ENCODE measurements at regions of chr9 and their contacts with region 1.

Region 1: DNA sequence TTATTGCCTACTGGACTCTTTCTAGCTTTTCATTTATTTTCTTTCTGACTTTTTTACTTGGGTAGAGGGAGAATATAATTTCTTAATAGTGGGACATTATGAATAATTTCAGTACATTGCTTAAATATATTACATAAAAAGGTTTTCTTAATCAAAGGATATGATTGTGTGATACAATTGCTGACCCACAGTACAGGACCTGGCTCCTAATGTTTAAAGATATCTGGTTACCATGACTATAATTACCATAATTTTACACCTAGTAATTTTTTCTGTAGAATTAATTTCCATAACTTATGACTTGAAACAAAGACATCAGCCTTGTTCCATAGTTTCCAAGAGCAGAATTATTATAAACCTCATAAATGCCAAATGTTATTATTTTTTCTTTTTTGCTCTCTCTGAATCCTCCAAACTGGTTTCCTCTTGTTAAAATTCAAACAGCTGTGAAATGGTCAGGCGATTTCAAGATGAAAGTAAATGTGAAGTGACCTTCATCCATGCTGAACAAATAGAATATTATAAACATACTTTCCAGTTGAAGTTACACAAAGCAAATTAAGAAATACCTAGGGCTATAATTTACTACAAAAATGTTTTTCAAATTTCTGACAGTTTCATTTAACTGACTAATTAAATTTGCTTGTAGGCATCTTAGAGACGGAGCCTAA is 301.2 kb upstream of the TYRP1 start:
- H3K4me3 Mint-ChIP-seq: no peak overlapping the region
- H3K27ac Mint-ChIP-seq: no peak overlapping the region
- H3K4me1 Mint-ChIP-seq: no peaks in the 10 kb centered on the region
- H3K27me3 Mint-ChIP-seq: no peaks in the 10 kb centered on the region

Region 2: GRCh38 chr9:11833056-11833455 is 558.9 kb before region 1 on chr9:
- intact Hi-C with region 1: no loop called
- H3K4me3 Mint-ChIP-seq: no peak overlapping the region
- H3K27ac Mint-ChIP-seq: no peak overlapping the region
- H3K4me1 Mint-ChIP-seq: no peaks in the 10 kb centered on the region
- H3K27me3 Mint-ChIP-seq: no peaks in the 10 kb centered on the region

Region 3: DNA sequence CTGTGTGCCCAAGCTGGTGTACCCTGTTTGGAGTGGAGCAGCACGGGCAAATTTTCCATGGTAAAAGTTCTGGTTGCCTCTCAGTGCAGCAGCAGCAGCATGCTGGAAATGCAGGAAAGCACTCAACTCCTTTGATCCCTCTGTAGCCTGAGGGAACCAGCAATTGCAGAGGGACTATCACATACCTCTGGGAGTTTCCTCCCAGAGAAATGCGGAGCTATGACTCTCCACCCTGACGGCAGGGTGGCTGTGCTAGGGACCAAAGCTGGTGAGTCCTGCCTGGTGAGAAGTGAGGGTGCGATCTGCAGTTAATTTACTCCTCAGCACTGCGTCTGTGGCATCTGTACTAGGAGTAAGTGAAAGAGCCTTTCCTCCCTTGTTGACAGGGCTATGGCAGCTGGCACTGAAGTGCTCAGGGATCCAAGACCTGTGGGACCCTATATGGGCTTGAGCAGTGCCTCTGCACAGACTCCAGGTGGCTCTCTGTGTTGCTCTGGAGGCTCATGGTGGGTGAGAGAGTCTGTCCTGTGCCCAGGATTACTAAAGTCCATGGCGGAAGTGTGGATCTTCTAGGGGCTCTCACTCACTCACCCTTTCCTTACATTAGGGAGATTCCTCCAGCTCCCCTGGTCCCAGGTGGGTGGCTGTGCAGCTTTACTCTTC is 300.0 kb before region 1 on chr9:
- intact Hi-C with region 1: no loop called
- H3K4me3 Mint-ChIP-seq: no peak overlapping the region
- H3K27ac Mint-ChIP-seq: no peak overlapping the region
- H3K4me1 Mint-ChIP-seq: no peaks in the 10 kb centered on the region
- H3K27me3 Mint-ChIP-seq: no peaks in the 10 kb centered on the region

Region 4: DNA sequence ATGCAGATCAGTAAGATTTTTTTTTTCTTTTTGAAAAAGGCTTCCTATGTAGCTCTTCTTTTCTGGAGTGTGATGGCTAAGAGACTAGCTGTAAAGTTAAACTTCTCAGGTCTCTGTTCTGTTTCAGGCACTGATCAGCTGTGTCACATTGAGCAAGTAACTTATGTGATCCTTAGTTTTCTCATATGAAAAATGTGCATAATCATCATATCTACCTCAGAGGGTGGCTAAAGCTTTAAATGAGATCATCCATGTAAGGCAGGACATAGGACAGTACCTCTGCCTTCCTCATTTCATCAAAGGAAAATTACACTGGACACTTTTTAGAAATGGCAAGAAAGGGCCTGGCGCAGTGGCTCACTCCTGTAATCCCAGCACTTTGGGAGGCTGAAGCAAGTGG is 65.3 kb after region 1 on chr9:
- intact Hi-C with region 1: loop called (anchors 10 kb)
- H3K4me3 Mint-ChIP-seq: no peak overlapping the region
- H3K27ac Mint-ChIP-seq: no peak overlapping the region
- H3K4me1 Mint-ChIP-seq: no peaks in the 10 kb centered on the region
- H3K27me3 Mint-ChIP-seq: no peaks in the 10 kb centered on the region

Measured in dendritic cell treated with granulocyte-macrophage colony-stimulating factor and Interleukin-4, amounts not matched to agents 40 ng/mL and 50 ng/mL, for 4 days (primary cell).